B cell (primary cell): ENCODE measurements at regions of chr9 and their contacts with region 1.

Region 1: GRCh38 chr9:93134015-93134739 is at the start of gene NINJ1:
- DNase-seq: peak; percentile 94
- ATAC-seq: peak; percentile 85
- H3K4me3 ChIP-seq: peak within 1 kb of the TSS; percentile 16 to 77 (median 67)
- H3K4me3 Mint-ChIP-seq: peak within 1 kb of the TSS; percentile 90
- H3K27ac ChIP-seq: peak within 1 kb of the TSS; percentile 68 to 76
- H3K27ac Mint-ChIP-seq: peak within 1 kb of the TSS; percentile 84
- H3K4me1 ChIP-seq: peaks cover 25 to 33% of the 10 kb centered on the region in 2 donors
- H3K4me1 Mint-ChIP-seq: peaks cover 43% of the 10 kb centered on the region
- H3K27me3 ChIP-seq: peaks cover 0 to 13% (median 0%) of the 10 kb centered on the region in 4 experiments
- H3K27me3 Mint-ChIP-seq: no peaks in the 10 kb centered on the region
- CTCF ChIP-seq: no peak
- total RNA-seq, gene NINJ1: 7.6 and 8.3 TPM in 2 replicates

Region 2: DNA sequence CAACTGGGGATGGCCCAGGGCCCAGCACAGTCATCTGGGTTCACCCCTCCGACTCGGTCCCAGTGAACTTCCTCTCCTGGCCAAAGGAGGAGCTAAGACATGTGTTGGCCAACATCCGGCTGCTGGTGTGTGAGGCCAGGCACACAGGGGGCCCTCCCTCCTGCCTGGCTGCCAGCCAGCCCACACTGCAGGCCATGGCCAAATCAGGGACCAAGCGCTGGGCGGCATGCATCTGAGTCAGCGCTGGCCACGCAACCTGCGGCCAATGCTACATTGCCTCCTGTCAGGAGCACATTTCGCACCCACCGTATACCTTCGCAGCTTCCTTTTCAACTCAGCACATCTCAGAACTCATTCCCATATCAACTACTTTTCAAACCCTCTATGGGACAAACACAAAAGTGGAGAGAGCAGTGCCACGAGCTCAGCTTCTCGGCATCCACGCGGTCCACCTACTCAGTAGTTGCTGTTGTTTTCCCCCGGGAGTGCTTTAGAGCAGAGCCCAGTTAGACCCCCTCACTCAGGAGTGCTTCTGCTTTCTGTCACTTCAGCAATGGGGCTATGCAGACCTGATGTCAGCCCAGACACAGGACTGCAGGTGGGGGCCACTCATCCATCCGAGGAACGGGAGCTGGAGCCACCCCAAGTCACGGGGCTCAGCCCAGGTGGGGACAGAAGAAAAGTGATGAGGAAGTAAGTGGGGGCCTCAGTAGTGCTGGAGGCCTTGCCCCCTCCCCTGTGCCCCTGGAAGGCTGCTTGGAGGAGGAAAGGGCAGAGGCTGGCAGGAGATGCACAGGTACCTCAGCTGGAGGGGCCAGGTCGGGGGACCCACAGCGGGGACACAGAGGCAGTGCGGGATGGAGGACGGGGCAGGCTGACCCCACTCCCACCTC is 14.0 kb before region 1 on chr9:
- CTCF ChIA-PET with region 1: interaction called, 6 read pairs
- POLR2A ChIA-PET with region 1: no interaction called
- intact Hi-C with region 1: loop called (anchors 1 kb)
- DNase-seq: peak; percentile 79
- ATAC-seq: peak; percentile 86
- H3K4me3 ChIP-seq: peak overlapping the region in 2 of 5 experiments; percentile 29 to 45
- H3K4me3 Mint-ChIP-seq: peak overlapping the region; percentile 77
- H3K27ac ChIP-seq: peak overlapping the region; percentile 24 to 34
- H3K27ac Mint-ChIP-seq: peak overlapping the region; percentile 79
- H3K4me1 ChIP-seq: peaks cover 13 to 20% of the 10 kb centered on the region in 2 donors
- H3K4me1 Mint-ChIP-seq: peaks cover 14% of the 10 kb centered on the region
- H3K27me3 ChIP-seq: no peaks in the 10 kb centered on the region
- H3K27me3 Mint-ChIP-seq: no peaks in the 10 kb centered on the region
- CTCF ChIP-seq: peak; percentile 58

Region 3: GRCh38 chr9:93154315-93154903 is 20.2 kb after region 1 on chr9:
- CTCF ChIA-PET with region 1: no interaction called
- POLR2A ChIA-PET with region 1: no interaction called
- intact Hi-C with region 1: no loop called
- DNase-seq: peak; percentile 44
- ATAC-seq: peak; percentile 31
- H3K4me3 ChIP-seq: no peak overlapping the region
- H3K4me3 Mint-ChIP-seq: no peak overlapping the region
- H3K27ac ChIP-seq: no peak overlapping the region
- H3K27ac Mint-ChIP-seq: no peak overlapping the region
- H3K4me1 ChIP-seq: no peaks in the 10 kb centered on the region
- H3K4me1 Mint-ChIP-seq: no peaks in the 10 kb centered on the region
- H3K27me3 ChIP-seq: no peaks in the 10 kb centered on the region
- H3K27me3 Mint-ChIP-seq: no peaks in the 10 kb centered on the region
- CTCF ChIP-seq: peak; percentile 65

Region 4: DNA sequence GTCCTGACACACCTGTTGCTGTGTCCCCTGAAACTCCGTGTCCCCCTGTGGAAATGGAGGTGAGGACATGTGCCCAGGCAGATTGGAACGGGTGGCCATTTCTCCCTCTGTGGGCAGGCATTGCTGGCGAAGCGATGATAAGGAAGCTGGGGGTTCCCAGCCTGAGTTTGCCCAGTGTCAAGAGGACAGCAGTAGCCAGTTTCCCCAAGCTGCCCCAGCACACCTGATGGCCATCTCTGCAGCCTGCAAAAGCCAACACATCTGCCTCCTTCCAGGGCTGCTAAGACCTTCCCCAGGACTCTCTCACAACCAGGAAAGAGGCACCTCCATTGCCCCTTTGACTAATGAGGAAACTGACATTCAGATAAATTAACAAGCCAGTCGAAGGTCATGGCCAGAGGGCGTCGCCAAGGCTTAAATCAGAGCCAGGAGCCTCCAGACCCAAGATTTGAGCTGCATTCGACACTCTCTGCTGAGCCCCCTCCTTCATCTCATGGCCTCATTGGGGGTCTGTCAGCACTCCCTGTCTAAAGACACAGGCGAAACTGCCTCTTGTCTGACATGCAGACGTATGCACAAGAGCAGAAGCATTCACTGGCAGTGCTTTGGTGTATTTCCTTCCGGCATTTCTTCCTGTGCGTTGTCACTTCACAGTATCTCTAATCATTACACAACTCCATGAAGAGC is 39.3 kb after region 1 on chr9:
- CTCF ChIA-PET with region 1: no interaction called
- POLR2A ChIA-PET with region 1: no interaction called
- intact Hi-C with region 1: no loop called
- DNase-seq: no peak
- ATAC-seq: no peak
- H3K4me3 ChIP-seq: no peak overlapping the region
- H3K4me3 Mint-ChIP-seq: no peak overlapping the region
- H3K27ac ChIP-seq: no peak overlapping the region
- H3K27ac Mint-ChIP-seq: no peak overlapping the region
- H3K4me1 ChIP-seq: no peaks in the 10 kb centered on the region
- H3K4me1 Mint-ChIP-seq: no peaks in the 10 kb centered on the region
- H3K27me3 ChIP-seq: no peaks in the 10 kb centered on the region
- H3K27me3 Mint-ChIP-seq: peaks cover 11% of the 10 kb centered on the region
- CTCF ChIP-seq: no peak